Upper lobe of right lung (tissue), 1 donor: ENCODE measurements at regions of chr17 and their contacts with region 1.

Region 1: GRCh38 chr17:2414446-2415064 is 13.7 kb upstream of the MNT start:
- DNase-seq: no peak
- ATAC-seq: no peak
- H3K4me3 ChIP-seq: no peak overlapping the region
- H3K27ac ChIP-seq: no peak overlapping the region
- H3K4me1 ChIP-seq: peaks cover 23% of the 10 kb centered on the region
- H3K27me3 ChIP-seq: no peaks in the 10 kb centered on the region
- CTCF ChIP-seq: no peak

Region 2: GRCh38 chr17:2282297-2282873 is 132.2 kb before region 1 on chr17:
- intact Hi-C with region 1: no loop called
- DNase-seq: no peak
- ATAC-seq: peak; percentile 76
- H3K4me3 ChIP-seq: no peak overlapping the region
- H3K27ac ChIP-seq: no peak overlapping the region
- H3K4me1 ChIP-seq: no peaks in the 10 kb centered on the region
- H3K27me3 ChIP-seq: no peaks in the 10 kb centered on the region
- CTCF ChIP-seq: peak; percentile 70

Region 3: DNA sequence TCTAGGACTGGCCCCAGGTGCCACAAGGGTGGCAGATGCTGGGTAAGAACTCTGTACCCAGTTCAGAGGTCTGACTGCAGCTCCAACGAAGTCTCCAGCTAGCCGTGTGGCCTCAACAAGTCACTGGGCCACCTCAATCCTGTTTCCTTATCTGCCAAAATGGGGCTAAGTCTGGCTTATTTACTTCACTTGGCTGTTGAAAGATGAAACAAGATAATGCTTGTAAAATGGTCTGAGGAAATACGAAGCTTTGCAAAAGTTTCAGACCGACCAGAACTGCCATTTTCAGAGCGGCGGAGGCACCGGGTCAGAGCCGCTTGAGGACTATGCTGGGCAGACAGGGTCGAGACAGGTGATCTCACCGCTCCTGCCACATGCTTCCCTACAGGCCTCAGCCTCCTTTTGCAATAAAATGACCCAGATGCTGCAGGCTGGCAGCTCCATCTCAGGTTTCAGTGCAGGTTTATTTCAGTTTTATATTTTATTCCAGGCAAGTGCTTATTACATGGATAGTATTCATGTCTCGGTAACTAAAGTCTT is 30.9 kb before region 1 on chr17:
- intact Hi-C with region 1: loop called (anchors 2 kb)
- DNase-seq: no peak
- ATAC-seq: no peak
- H3K4me3 ChIP-seq: no peak overlapping the region
- H3K27ac ChIP-seq: peak overlapping the region; percentile 18
- H3K4me1 ChIP-seq: no peaks in the 10 kb centered on the region
- H3K27me3 ChIP-seq: no peaks in the 10 kb centered on the region
- CTCF ChIP-seq: no peak

Region 4: DNA sequence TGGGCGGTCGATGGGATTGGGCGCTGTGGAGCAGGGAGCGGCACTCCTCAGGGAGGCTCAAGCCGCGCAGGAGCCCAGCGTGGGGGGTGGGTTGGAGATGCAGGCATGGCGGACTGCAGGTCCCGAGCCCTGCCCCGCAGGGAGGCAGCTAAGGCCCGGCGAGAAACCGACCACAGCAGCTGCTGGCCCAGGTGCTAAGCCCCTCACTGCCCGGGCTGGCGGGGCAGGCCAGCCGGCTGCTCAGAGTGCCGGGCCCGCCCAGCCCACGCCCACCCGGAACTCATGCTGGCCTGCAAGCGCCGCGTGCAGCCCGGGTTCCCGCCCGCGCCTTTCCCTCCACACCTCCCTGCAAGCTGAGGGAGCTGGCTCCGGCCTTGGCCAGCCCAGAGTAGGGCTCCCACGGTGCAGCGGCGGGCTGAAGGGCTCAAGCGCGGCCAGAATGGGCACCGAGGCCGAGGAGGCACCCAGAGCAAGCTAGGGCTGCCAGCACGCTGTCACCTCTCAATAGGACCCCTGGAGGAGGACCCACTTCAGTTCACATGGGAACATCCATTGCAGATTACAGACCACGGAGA is 117.7 kb after region 1 on chr17:
- intact Hi-C with region 1: no loop called
- DNase-seq: no peak
- ATAC-seq: no peak
- H3K4me3 ChIP-seq: no peak overlapping the region
- H3K27ac ChIP-seq: no peak overlapping the region
- H3K4me1 ChIP-seq: no peaks in the 10 kb centered on the region
- H3K27me3 ChIP-seq: no peaks in the 10 kb centered on the region
- CTCF ChIP-seq: no peak